ENCODE measurements at regions of chr1 and their contacts with region 1.

Region 1: GRCh38 chr1:34113887-34114286 is 51.1 kb downstream of the CSMD2 start:
- DNase-seq: peak; percentile 22
- H3K4me3 Mint-ChIP-seq: no peak overlapping the region
- H3K27ac Mint-ChIP-seq: no peak overlapping the region
- H3K4me1 Mint-ChIP-seq: no peaks in the 10 kb centered on the region
- H3K27me3 Mint-ChIP-seq: no peaks in the 10 kb centered on the region
- CTCF ChIP-seq: peak; percentile 10

Region 2: DNA sequence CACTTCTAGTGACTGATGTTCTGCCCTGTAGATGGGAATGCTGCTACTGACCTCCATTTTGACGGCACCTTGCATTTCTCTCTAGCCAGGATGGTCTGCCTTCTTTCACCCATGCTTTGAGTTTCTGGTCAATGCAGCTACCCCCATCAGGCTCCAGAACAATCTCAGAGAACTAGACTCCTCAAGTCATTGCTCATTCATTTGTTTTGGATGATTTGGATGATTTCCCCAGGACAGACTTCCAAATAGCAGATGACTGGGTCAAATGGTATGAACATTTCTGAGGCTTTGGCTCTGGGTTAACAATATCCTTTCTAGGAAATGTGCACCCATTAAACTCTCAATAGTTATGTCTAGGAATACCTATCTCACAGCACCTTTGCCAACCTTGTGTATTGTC is 12.7 kb before region 1 on chr1:
- CTCF ChIA-PET with region 1: interaction called, 10 read pairs
- POLR2A ChIA-PET with region 1: no interaction called
- intact Hi-C with region 1: no loop called
- DNase-seq: no peak
- H3K4me3 Mint-ChIP-seq: no peak overlapping the region
- H3K27ac Mint-ChIP-seq: no peak overlapping the region
- H3K4me1 Mint-ChIP-seq: no peaks in the 10 kb centered on the region
- H3K27me3 Mint-ChIP-seq: no peaks in the 10 kb centered on the region
- CTCF ChIP-seq: no peak

Region 3: GRCh38 chr1:34129626-34130025 is 15.7 kb after region 1 on chr1:
- CTCF ChIA-PET with region 1: interaction called, 10 read pairs
- POLR2A ChIA-PET with region 1: no interaction called
- intact Hi-C with region 1: no loop called
- DNase-seq: no peak
- H3K4me3 Mint-ChIP-seq: no peak overlapping the region
- H3K27ac Mint-ChIP-seq: no peak overlapping the region
- H3K4me1 Mint-ChIP-seq: no peaks in the 10 kb centered on the region
- H3K27me3 Mint-ChIP-seq: no peaks in the 10 kb centered on the region
- CTCF ChIP-seq: no peak

Region 4: GRCh38 chr1:34426325-34426891 is 312.5 kb after region 1 on chr1:
- CTCF ChIA-PET with region 1: interaction called, 10 read pairs
- POLR2A ChIA-PET with region 1: no interaction called
- intact Hi-C with region 1: no loop called
- DNase-seq: peak; percentile 9
- H3K4me3 Mint-ChIP-seq: no peak overlapping the region
- H3K27ac Mint-ChIP-seq: no peak overlapping the region
- H3K4me1 Mint-ChIP-seq: no peaks in the 10 kb centered on the region
- H3K27me3 Mint-ChIP-seq: no peaks in the 10 kb centered on the region
- CTCF ChIP-seq: no peak

Measured in MCF 10A (cell line).